Psoas muscle (tissue), 8 donors: ENCODE measurements at regions of chr21 and their contacts with region 1.

Region 1: GRCh38 chr21:33374450-33375096 is 28.6 kb upstream of the IFNGR2 start:
- DNase-seq: no peak
- ATAC-seq: peak; percentile 37 to 66 (median 48)
- H3K4me3 ChIP-seq: no peak overlapping the region
- H3K27ac ChIP-seq: no peak overlapping the region
- H3K4me1 ChIP-seq: peaks cover 6% of the 10 kb centered on the region
- H3K27me3 ChIP-seq: peaks cover 0 to 3% (median 0%) of the 10 kb centered on the region in 3 donors
- CTCF ChIP-seq: peak; percentile 52

Region 2: DNA sequence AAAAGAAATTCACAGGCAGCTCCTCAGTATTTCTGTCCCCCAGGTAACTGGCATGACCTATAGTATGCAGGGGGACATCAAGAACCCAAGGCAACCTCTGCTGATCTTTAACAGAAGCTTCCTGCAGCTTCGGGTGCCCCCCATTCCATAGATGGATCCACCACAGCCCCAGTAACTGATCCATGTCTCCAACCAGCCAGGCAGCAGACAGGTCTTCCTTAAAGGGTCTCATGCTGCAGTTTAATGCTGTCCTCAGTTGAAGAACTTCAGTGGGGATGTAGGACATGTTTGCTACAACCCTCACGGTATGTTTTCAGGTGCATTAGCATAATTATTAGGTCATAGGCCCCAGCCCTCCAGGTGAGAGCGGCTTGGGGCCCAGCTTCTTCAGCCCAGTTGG is 439.7 kb before region 1 on chr21:
- intact Hi-C with region 1: loop called in 1 of 2 experiments (anchors 5 kb)
- DNase-seq: no peak
- ATAC-seq: no peak
- H3K4me3 ChIP-seq: no peak overlapping the region
- H3K27ac ChIP-seq: no peak overlapping the region
- H3K4me1 ChIP-seq: no peaks in the 10 kb centered on the region
- H3K27me3 ChIP-seq: no peaks in the 10 kb centered on the region
- CTCF ChIP-seq: no peak